Left ventricle myocardium superior (tissue), 1 donor: ENCODE measurements at regions of chr5 and their contacts with region 1.

Region 1: DNA sequence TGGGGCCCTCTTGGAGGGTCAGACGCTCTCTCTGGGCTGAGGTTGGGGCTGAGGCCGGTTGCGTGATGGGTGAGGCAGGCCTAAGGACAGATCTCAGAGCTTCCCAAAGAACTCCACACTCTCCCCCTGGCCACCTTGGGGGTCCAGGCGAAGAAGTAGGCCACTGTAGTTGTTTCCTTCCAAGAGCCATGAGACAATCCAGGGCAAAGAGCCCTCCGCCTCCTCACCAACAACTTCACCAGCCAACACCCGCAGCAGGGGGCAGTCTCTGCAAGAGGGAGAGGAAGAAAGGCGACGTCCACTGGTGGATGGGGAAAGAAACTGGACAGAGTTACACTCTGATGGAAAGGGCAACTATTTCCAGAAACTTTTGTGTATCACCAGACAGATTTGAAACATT is 10.7 kb downstream of the SLC35A4 start:
- DNase-seq: peak; percentile 65
- ATAC-seq: peak; percentile 57

Region 2: GRCh38 chr5:140639148-140639979 is 64.1 kb after region 1 on chr5 and contains the start of gene TMCO6:
- intact Hi-C with region 1: loop called (anchors 10 kb)
- DNase-seq: peak; percentile 99
- ATAC-seq: peak; percentile 99
- total RNA-seq, gene TMCO6: 3.2 TPM